Activated CD4-positive, alpha-beta T cell treated with anti-CD3 and anti-CD28 coated beads for 36 hours (primary cell): ENCODE measurements at regions of chr1 and their contacts with region 1.

Region 1: GRCh38 chr1:112619520-112620376 is at the start of gene CAPZA1:
- DNase-seq: peak; percentile 95
- ATAC-seq: peak; percentile 85
- H3K4me3 Mint-ChIP-seq: peak within 1 kb of the TSS; percentile 99
- H3K27ac Mint-ChIP-seq: peak within 1 kb of the TSS; percentile 100
- H3K4me1 Mint-ChIP-seq: peaks cover 34% of the 10 kb centered on the region
- H3K27me3 Mint-ChIP-seq: no peaks in the 10 kb centered on the region
- total RNA-seq, gene CAPZA1: 251 to 302 TPM

Region 2: DNA sequence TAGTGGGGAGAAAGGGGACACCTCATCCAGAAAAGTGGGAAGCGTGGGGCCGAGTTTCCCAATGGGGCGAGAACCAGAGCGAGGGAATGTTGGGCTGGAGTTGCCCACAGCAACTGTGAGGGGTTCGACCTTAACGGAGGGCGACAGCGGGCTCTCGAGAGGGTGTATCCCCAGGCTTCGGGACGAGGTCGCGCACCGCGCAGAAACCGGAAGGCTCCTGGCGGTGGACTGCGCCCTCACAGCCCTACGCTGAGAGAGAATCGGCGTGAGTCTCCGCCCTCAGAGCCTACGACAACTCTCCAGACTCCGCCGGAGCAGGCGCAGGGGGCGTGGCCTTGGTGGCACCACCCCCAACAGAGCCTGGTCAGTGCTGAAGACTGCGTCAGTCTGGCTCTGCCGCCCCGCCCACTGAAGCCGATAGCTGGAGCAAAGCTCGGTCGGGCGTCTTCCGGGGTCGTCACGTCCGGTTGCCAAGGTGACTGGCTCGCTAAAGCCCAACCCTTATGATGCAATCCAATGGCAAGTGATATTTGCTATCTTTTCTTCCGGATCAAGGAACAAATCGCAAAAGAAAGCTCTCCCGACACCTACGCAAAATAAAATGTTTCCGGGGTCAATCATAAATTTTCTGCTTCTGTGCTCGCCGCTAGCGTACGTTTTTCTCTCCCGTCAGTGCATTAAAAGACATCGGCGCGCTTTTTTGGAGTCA is 1655.9 kb before region 1 on chr1 and contains the start of gene LRIF1:
- CTCF ChIA-PET with region 1: no interaction called
- POLR2A ChIA-PET with region 1: no interaction called
- intact Hi-C with region 1: loop called in 1 of 2 experiments (anchors 5 kb)
- DNase-seq: peak; percentile 100
- ATAC-seq: peak; percentile 99
- H3K4me3 Mint-ChIP-seq: peak within 1 kb of the TSS; percentile 78
- H3K27ac Mint-ChIP-seq: peak within 1 kb of the TSS; percentile 94
- H3K4me1 Mint-ChIP-seq: peaks cover 30% of the 10 kb centered on the region
- H3K27me3 Mint-ChIP-seq: peaks cover 7% of the 10 kb centered on the region
- total RNA-seq, gene LRIF1: 15.1 to 15.4 TPM

Region 3: DNA sequence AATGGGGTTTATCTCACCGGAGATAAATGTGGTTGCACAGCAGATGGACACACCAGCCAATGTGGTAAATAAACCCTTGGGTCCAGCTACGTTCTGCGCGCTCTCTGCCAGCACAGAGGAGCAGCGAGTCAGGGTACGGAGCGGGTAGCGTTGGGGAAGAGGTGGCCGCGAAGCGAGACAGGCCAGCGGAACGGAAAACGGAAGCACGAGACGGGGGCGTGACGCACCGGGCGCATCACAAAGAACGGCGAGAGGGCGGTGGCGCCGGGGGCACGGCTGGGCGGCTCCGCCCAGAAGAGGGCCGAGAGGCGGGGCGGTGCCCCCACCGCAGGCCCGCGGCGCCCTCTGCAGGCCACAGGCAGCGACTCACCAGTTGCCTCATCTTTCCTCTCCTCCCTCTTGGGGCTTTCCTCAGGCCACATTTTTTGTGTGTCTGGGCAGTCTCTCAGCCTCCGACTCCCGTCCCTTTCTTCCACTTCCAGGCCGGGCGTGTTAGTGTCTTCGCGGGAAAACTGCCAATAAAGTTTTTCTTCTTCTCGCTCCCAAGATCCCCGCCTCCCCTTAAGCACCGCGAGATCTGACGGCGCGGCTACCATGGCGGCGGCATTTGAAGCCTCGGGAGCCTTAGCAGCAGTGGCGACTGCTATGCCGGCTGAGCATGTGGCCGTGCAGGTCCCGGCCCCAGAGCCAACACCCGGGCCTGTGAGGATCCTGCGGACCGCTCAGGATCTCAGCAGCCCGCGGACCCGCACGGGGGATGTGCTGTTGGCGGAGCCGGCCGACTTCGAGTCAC is 864.2 kb before region 1 on chr1 and contains the start of gene DDX20:
- CTCF ChIA-PET with region 1: no interaction called
- POLR2A ChIA-PET with region 1: no interaction called
- intact Hi-C with region 1: loop called in 1 of 2 experiments (anchors 2 kb)
- DNase-seq: peak; percentile 97
- ATAC-seq: peak; percentile 90
- H3K4me3 Mint-ChIP-seq: peak within 1 kb of the TSS; percentile 83
- H3K27ac Mint-ChIP-seq: peak within 1 kb of the TSS; percentile 98
- H3K4me1 Mint-ChIP-seq: peaks cover 35% of the 10 kb centered on the region
- H3K27me3 Mint-ChIP-seq: no peaks in the 10 kb centered on the region
- total RNA-seq, gene DDX20: 13.5 to 13.6 TPM

Region 4: GRCh38 chr1:112477550-112477949 is 142.2 kb before region 1 on chr1:
- CTCF ChIA-PET with region 1: no interaction called
- POLR2A ChIA-PET with region 1: no interaction called
- intact Hi-C with region 1: no loop called
- DNase-seq: no peak
- ATAC-seq: no peak
- H3K4me3 Mint-ChIP-seq: no peak overlapping the region
- H3K27ac Mint-ChIP-seq: no peak overlapping the region
- H3K4me1 Mint-ChIP-seq: no peaks in the 10 kb centered on the region
- H3K27me3 Mint-ChIP-seq: peaks cover 21% of the 10 kb centered on the region

Region 5: DNA sequence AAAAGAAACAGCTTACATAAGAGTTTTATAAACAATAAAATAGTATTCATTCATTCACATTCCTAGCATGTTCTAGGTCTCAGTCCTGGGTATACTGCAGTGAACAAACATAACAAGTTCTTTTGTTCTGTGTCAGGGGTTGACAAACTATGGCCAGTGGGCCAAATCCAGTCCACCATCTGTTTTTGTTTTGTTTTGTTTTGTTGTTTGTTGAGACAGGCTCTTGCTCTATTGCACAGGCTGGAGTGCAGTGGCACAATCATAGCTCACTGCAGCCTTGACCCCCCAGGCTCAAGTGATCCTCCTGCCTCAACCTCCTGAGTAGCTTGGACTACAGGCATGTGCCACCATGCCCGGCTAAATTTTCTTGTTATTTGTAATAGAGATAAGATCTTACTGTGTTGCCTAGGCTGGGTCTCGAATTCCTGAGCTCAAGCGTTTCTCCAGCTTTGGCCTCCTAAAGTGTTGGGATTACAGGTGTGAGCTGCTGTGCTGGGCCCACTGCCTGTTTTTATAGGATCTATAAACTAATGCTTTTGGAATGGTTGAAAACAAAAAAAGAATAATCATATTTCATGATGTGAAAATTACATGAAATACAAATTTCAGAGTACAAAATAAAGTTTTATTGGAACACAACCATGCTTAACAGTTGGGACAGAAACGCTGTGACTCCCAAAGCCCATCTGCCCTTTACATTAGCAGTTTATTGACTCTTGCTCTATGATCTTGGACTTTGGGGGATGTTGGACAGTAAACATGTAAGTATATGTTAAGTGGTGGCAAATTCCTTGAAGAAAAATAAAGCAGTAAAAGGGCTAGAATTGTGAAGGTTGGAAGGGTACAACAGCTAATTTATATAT is 17.7 kb after region 1 on chr1:
- CTCF ChIA-PET with region 1: no interaction called
- POLR2A ChIA-PET with region 1: interaction called, 3 read pairs
- intact Hi-C with region 1: loop called in 1 of 2 experiments (anchors 2 kb)
- DNase-seq: no peak
- ATAC-seq: no peak
- H3K4me3 Mint-ChIP-seq: no peak overlapping the region
- H3K27ac Mint-ChIP-seq: peak overlapping the region; percentile 68
- H3K4me1 Mint-ChIP-seq: peaks cover 54% of the 10 kb centered on the region
- H3K27me3 Mint-ChIP-seq: no peaks in the 10 kb centered on the region

Region 6: DNA sequence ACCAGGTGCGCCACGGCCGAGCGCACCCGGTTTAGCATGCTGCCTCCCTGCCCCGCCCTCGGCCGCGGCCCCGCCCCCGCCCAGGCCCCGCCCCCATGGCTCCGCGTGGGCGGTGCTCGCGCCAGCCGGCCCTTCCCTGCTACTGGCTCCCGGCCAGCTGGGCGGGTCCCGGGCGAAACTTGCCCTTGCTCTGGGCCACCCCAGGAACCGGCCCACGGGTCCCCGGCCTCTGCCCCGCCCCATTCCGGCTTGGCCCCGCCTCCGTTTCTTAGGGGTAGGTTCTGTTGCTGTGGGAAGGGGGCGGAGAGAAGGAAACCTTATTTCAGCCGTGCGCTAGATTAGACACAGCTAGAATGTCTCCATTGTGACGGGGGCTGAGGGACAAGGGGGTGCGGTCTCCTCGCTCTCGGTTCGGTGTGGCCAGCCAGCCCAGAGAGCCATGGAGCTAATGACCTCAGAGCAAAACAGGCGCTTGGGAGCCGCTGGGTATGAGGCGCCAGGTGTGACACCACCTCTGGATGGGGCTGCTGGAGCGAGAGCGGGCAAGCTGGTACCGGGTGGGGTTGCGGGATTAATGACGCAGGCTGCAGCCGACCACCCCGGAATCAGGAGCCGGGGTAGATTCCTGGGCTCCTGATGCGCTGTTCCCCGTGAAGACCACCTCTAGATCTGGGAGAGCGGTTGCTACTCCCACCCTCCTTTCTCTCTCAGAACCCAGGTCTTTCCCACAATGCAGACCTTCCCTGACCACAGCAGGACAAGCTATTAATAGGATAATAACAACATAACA is 95.7 kb after region 1 on chr1 and contains the start of gene PPM1J:
- CTCF ChIA-PET with region 1: interaction called, 3 read pairs
- POLR2A ChIA-PET with region 1: interaction called, 3 read pairs
- intact Hi-C with region 1: loop called in 1 of 2 experiments (anchors 1 kb)
- DNase-seq: peak; percentile 97
- ATAC-seq: peak; percentile 84
- H3K4me3 Mint-ChIP-seq: peak within 1 kb of the TSS; percentile 74
- H3K27ac Mint-ChIP-seq: no peak within 1 kb of the TSS
- H3K4me1 Mint-ChIP-seq: peaks cover 14% of the 10 kb centered on the region
- H3K27me3 Mint-ChIP-seq: peaks cover 18% of the 10 kb centered on the region
- total RNA-seq, gene PPM1J: 0.75 to 0.88 TPM

Region 7: GRCh38 chr1:113928941-113929749 is 1309.4 kb after region 1 on chr1 and contains the start of gene HIPK1:
- CTCF ChIA-PET with region 1: no interaction called
- POLR2A ChIA-PET with region 1: no interaction called
- intact Hi-C with region 1: loop called in 1 of 2 experiments (anchors 2 kb)
- DNase-seq: peak; percentile 96
- ATAC-seq: peak; percentile 66
- H3K4me3 Mint-ChIP-seq: peak within 1 kb of the TSS; percentile 84
- H3K27ac Mint-ChIP-seq: peak within 1 kb of the TSS; percentile 99
- H3K4me1 Mint-ChIP-seq: peaks cover 41% of the 10 kb centered on the region
- H3K27me3 Mint-ChIP-seq: no peaks in the 10 kb centered on the region
- total RNA-seq, gene HIPK1: 42.2 to 50.3 TPM